Naive thymus-derived CD4-positive, alpha-beta T cell (primary cell): ENCODE measurements at regions of chr3 and their contacts with region 1.

Region 1: DNA sequence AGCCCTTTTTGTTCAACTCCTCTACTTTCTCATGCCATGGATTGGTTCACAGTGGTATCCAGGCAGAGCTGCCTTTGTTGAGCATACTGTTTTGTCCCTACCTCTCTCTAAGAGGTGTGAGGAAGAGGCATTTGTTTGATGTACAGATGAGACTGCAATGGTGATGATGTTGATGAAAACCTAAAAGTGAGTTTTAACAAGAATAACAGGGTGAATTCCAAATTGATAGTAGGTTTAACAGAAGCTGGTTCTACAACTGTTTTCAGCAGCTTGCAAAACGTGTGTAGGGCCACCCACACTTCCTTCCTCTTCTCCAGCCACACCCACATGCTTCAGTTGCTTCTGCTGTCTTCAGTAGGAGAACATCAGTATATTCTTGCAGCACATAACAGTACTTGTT is 10.2 kb downstream of the SNRK start:
- DNase-seq: peak in 8 of 9 donors; percentile 51 to 93 (median 86)
- ATAC-seq: peak; percentile 95
- H3K4me3 ChIP-seq: peak overlapping the region; percentile 53
- H3K4me3 Mint-ChIP-seq: peak overlapping the region; percentile 81 to 99 (median 87)
- H3K27ac ChIP-seq: peak overlapping the region; percentile 89
- H3K27ac Mint-ChIP-seq: peak overlapping the region; percentile 92 to 99 (median 96)
- H3K4me1 ChIP-seq: peaks cover 76 to 78% of the 10 kb centered on the region in 2 donors
- H3K4me1 Mint-ChIP-seq: peaks cover 46 to 97% (median 83%) of the 10 kb centered on the region in 7 donors
- H3K27me3 ChIP-seq: no peaks in the 10 kb centered on the region
- H3K27me3 Mint-ChIP-seq: no peaks in the 10 kb centered on the region

Region 2: DNA sequence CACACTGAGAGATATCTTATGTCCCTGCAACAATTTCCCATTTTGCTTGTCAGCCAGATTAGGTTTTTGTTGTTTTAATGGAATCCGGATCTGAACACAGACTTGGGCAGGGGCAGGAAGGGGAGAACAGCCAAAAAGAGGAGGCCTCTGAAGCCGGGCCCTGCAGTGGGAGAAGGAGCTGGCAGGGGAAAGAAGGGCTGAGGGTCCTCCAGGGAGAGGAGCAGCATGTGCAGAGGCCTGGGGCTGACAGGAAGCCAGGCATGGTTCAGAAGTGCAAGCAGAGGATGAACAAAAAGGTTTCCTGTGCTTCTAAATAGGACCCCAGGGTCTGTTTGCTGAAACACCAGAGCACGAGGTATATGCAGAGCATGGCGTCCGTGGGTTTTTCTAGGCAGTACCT is 141.6 kb before region 1 on chr3:
- CTCF ChIA-PET with region 1: no interaction called
- POLR2A ChIA-PET with region 1: no interaction called
- intact Hi-C with region 1: no loop called
- DNase-seq: peak in 3 of 9 donors; percentile 10 to 19 (median 15)
- ATAC-seq: no peak
- H3K4me3 ChIP-seq: no peak overlapping the region
- H3K4me3 Mint-ChIP-seq: peak overlapping the region in 3 of 10 donors; percentile 4 to 23 (median 12)
- H3K27ac ChIP-seq: no peak overlapping the region
- H3K27ac Mint-ChIP-seq: peak overlapping the region in 6 of 9 donors; percentile 19 to 91 (median 66)
- H3K4me1 ChIP-seq: peaks cover 0 to 11% of the 10 kb centered on the region in 2 donors
- H3K4me1 Mint-ChIP-seq: peaks cover 8 to 25% (median 17%) of the 10 kb centered on the region in 7 donors
- H3K27me3 ChIP-seq: no peaks in the 10 kb centered on the region
- H3K27me3 Mint-ChIP-seq: peaks cover 0 to 25% (median 0%) of the 10 kb centered on the region in 5 donors

Region 3: DNA sequence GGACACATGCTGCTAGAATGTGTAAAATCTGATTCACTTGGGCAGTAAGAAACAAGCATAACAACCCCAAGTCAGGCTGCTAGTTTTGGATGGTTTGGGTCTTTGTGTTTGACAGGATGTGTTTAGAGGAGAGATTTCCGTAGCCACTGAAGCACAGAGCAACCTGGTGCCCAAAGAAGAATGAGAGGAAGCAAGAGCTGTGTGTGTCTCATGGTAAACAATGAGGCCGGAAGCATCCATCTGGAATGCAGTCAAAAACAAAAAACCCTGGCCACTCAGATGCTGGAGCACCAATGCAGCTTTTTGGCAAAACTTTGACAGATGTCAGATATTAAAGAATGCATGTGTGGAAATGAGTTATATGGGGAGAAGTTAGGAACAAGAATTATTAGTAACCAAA is 49.6 kb before region 1 on chr3:
- CTCF ChIA-PET with region 1: no interaction called
- POLR2A ChIA-PET with region 1: interaction called, 14 read pairs
- intact Hi-C with region 1: no loop called
- DNase-seq: peak in 6 of 9 donors; percentile 33 to 62 (median 50)
- ATAC-seq: peak; percentile 66
- H3K4me3 ChIP-seq: no peak overlapping the region
- H3K4me3 Mint-ChIP-seq: peak overlapping the region; percentile 8 to 78 (median 61)
- H3K27ac ChIP-seq: peak overlapping the region; percentile 53
- H3K27ac Mint-ChIP-seq: peak overlapping the region; percentile 49 to 90 (median 80)
- H3K4me1 ChIP-seq: peaks cover 9 to 53% of the 10 kb centered on the region in 2 donors
- H3K4me1 Mint-ChIP-seq: peaks cover 35 to 69% (median 65%) of the 10 kb centered on the region in 7 donors
- H3K27me3 ChIP-seq: no peaks in the 10 kb centered on the region
- H3K27me3 Mint-ChIP-seq: peaks cover 0 to 4% (median 0%) of the 10 kb centered on the region in 5 donors

Region 4: DNA sequence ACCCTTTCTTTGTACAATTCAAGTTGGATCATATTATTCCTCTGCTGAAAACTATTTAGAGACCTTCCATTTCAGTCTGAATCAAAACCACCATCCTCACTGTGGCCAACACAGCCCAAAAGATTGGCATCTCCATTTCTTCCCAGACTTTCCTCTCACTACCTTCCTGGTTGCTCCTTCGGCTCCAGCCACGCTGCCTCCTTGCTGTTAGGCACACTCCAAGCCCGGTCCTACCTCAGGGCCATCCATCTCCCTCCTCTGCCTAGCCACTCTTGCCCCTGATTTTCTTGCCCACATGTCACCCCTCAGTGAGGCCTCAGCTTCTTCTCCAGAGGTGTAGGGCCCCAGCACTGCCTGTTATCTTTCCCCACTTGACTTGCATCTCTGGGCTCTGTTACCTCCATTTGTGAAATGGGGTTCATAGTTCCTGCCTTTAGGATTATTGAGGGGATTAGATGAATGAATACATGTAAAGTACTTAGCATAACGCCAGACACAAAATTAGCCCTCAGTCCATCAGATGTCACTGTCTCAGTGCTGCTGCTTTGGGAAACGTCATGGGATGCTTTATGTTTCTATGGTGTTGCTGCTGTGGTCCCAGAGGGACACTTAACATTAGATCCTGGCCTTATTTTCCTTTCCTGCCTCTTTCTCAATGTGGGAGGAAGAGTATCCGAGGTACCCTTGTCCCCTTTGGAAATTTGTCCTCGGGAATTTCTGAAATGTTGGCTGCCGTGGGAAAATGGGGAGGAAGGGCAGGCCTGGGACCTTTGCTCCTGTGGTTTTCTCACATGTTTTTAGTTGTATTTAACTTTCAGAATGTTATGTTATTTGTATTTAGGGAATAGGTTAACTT is 21.1 kb after region 1 on chr3:
- CTCF ChIA-PET with region 1: interaction called, 4 read pairs
- POLR2A ChIA-PET with region 1: interaction called, 20 read pairs
- intact Hi-C with region 1: no loop called
- DNase-seq: no peak
- ATAC-seq: peak; percentile 24
- H3K4me3 ChIP-seq: no peak overlapping the region
- H3K4me3 Mint-ChIP-seq: peak overlapping the region in 9 of 10 donors; percentile 37 to 76 (median 59)
- H3K27ac ChIP-seq: peak overlapping the region; percentile 42
- H3K27ac Mint-ChIP-seq: peak overlapping the region; percentile 7 to 91 (median 80)
- H3K4me1 ChIP-seq: peaks cover 28 to 48% of the 10 kb centered on the region in 2 donors
- H3K4me1 Mint-ChIP-seq: peaks cover 40 to 95% (median 93%) of the 10 kb centered on the region in 7 donors
- H3K27me3 ChIP-seq: no peaks in the 10 kb centered on the region
- H3K27me3 Mint-ChIP-seq: no peaks in the 10 kb centered on the region

Region 5: GRCh38 chr3:43334976-43335375 is 38.4 kb after region 1 on chr3:
- CTCF ChIA-PET with region 1: no interaction called
- POLR2A ChIA-PET with region 1: interaction called, 10 read pairs
- intact Hi-C with region 1: loop called in 1 of 2 experiments (anchors 5 kb)
- DNase-seq: no peak
- ATAC-seq: no peak
- H3K4me3 ChIP-seq: no peak overlapping the region
- H3K4me3 Mint-ChIP-seq: no peak overlapping the region
- H3K27ac ChIP-seq: no peak overlapping the region
- H3K27ac Mint-ChIP-seq: peak overlapping the region in 4 of 9 donors; percentile 14 to 62 (median 28)
- H3K4me1 ChIP-seq: peaks cover 0 to 5% of the 10 kb centered on the region in 2 donors
- H3K4me1 Mint-ChIP-seq: peaks cover 5 to 36% (median 24%) of the 10 kb centered on the region in 7 donors
- H3K27me3 ChIP-seq: no peaks in the 10 kb centered on the region
- H3K27me3 Mint-ChIP-seq: no peaks in the 10 kb centered on the region

Region 6: DNA sequence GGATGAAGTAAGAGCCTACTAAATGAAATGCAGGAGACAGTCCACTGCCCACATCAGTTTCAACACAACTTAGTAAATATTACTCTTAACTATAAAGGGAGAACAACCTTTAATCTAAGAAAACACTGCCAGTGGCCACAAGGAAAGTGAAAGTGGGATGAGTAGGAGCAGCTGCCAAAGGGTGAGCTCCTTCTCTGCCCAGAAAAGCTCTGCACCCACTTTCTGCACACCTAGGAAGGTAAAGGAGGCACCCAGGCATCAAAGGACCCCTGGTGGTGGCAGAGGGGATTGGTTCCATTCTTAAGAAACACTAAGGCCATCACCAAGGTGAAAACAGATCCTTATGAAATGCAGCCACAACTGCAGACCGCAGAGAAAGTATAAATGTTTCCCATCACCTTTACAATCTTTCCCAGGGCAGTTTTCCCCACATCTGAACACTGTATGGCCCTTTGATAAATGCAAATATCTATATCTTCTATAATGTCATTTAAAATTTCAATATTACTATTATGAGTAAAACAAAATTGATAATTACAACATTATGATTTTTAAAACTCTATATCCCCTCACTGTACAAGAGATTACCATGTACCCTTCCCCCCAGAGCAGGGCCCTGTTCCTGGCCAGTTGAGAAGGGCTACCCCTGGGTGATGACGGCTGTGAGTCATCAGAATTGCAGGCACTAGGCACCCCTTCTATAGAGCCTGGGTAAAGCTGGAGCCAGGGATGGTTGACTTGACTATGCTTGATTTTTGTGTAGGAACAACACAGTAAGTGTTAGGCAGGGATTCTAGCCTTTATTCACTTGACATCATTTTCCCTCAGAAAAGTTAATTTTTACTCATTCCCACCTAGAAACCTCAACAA is 81.7 kb after region 1 on chr3:
- CTCF ChIA-PET with region 1: interaction called, 6 read pairs
- POLR2A ChIA-PET with region 1: interaction called, 6 read pairs
- intact Hi-C with region 1: loop called in 1 of 2 experiments (anchors 2 kb)
- DNase-seq: peak; percentile 30 to 78 (median 71)
- ATAC-seq: peak; percentile 94
- H3K4me3 ChIP-seq: no peak overlapping the region
- H3K4me3 Mint-ChIP-seq: no peak overlapping the region
- H3K27ac ChIP-seq: no peak overlapping the region
- H3K27ac Mint-ChIP-seq: peak overlapping the region in 8 of 9 donors; percentile 26 to 88 (median 40)
- H3K4me1 ChIP-seq: peaks cover 6 to 10% of the 10 kb centered on the region in 2 donors
- H3K4me1 Mint-ChIP-seq: peaks cover 6 to 29% (median 19%) of the 10 kb centered on the region in 7 donors
- H3K27me3 ChIP-seq: no peaks in the 10 kb centered on the region
- H3K27me3 Mint-ChIP-seq: peaks cover 0 to 12% (median 0%) of the 10 kb centered on the region in 5 donors